ENCODE measurements at regions of chr1 and their contacts with region 1.

Region 1: DNA sequence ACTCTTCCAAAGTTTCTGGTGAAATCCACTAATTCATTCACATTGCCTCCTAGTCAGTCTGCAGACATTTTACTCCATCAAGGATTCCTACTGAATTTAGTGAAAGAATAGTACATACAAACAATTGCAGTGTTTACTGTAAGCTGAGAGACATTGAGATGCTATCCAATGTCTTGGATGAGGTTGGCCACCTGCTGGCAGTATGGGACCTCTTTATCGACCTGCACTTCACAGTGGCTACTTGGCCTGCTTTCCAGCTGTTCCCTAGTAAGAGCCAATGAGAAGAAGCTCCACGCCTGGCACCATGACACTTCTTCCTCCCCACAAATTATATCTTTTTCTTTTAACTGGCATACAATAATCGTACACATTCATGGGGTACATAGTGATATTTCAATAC is 51.5 kb upstream of the LRIF1 start:
- DNase-seq: no peak
- ATAC-seq: no peak
- H3K4me3 ChIP-seq: no peak overlapping the region
- H3K4me3 Mint-ChIP-seq: no peak overlapping the region
- H3K27ac ChIP-seq: no peak overlapping the region
- H3K27ac Mint-ChIP-seq: no peak overlapping the region
- H3K4me1 ChIP-seq: no peaks in the 10 kb centered on the region
- H3K4me1 Mint-ChIP-seq: no peaks in the 10 kb centered on the region
- H3K27me3 ChIP-seq: peaks cover 6 to 18% of the 10 kb centered on the region in 2 experiments
- H3K27me3 Mint-ChIP-seq: peaks cover 31% of the 10 kb centered on the region
- CTCF ChIP-seq: no peak

Region 2: GRCh38 chr1:111157431-111157830 is 142.2 kb after region 1 on chr1:
- CTCF ChIA-PET with region 1: no interaction called
- POLR2A ChIA-PET with region 1: no interaction called
- intact Hi-C with region 1: loop called in 1 of 2 experiments (anchors 5 kb)
- DNase-seq: no peak
- ATAC-seq: no peak
- H3K4me3 ChIP-seq: no peak overlapping the region
- H3K4me3 Mint-ChIP-seq: no peak overlapping the region
- H3K27ac ChIP-seq: no peak overlapping the region
- H3K27ac Mint-ChIP-seq: no peak overlapping the region
- H3K4me1 ChIP-seq: no peaks in the 10 kb centered on the region
- H3K4me1 Mint-ChIP-seq: peaks cover 56% of the 10 kb centered on the region
- H3K27me3 ChIP-seq: no peaks in the 10 kb centered on the region
- H3K27me3 Mint-ChIP-seq: no peaks in the 10 kb centered on the region
- CTCF ChIP-seq: no peak